Head of caudate nucleus (tissue), 42 donors: ENCODE measurements at regions of chr1 and their contacts with region 1.

Region 1: DNA sequence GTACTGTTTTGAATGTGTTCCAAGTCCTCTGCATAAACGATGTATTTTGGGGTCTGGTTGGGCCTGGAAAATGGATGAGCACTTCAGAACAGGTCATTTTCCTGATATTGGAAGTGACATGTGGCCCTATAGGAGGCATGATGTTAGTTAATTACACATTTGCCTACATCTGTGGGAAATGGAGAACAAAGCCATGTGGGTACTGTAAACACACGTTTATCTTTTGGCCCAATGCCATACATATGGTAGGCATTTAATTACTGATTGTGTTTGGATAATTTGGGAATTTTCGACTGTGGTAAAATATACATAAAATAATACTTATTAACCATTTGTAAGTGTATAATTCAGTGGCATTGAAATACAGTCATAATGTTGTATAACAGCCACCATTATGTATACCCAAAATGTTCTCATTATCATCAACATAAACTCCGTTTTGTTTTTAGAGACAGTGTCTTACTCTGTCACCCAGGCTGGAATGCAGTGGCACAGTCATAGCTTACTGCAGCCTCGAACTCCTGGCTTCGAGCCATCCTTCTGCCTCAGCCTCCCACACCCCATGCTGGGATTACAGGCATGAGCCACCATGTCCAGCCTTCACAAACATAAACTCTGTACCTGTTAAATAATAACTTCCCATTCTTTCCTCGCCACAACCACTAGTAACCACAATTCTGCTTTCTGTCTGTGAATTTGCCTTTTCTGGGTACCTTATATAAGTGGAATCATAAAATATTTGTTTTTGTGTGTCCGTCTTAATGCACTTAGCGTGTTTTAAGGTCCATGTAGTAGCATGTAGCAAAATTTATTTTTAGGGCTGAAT is 11.9 kb upstream of the RNPEP start:
- DNase-seq: no peak

Region 2: DNA sequence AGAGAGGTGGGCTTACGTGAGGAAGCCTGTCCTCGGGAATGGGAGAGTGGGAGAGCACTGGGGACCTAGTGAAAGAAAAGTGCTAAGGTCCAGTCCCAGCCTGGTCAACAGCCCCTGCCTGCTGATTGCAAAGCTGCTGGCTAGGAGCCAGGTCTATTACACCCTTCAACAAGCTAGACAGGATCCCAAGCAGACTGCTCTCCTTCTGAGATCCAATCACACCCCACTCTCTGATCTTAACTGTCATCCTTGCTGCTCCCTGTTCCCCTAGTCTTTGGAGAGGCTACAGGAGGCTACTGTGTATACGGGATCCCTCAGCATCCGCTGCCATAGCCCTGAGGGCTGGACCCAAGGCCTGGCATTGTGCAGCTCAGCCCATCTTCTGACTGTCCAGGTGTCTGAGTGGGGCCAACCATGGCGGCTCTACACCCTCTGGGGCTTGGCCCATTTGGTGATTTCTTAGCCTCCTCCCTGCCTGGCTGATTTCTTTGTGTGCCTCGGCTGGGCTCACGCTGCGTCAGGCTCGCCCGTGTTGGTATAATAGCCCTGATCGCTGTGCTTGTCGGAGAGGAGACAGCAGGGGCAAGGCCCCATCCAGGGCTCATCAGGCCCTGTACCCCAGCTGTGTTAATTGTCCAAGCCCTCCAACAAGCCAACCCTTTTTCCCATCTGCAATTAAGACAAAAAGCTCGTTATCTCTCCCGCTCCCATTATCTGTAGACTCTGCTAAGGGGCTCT is 387.7 kb before region 1 on chr1:
- intact Hi-C with region 1: no loop called
- DNase-seq: peak in 8 of 42 donors; percentile 21 to 70 (median 39)

Region 3: GRCh38 chr1:201877877-201878401 is 92.6 kb before region 1 on chr1:
- intact Hi-C with region 1: loop called (anchors 5 kb)
- DNase-seq: peak in 26 of 42 donors; percentile 22 to 84 (median 58)